CD8-positive, alpha-beta T cell (primary cell): ENCODE measurements at regions of chr3 and their contacts with region 1.

Region 1: GRCh38 chr3:105679951-105680350 is 188.9 kb downstream of the CBLB start:
- DNase-seq: no peak
- ATAC-seq: no peak
- H3K4me3 ChIP-seq: no peak overlapping the region
- H3K4me3 Mint-ChIP-seq: no peak overlapping the region
- H3K27ac ChIP-seq: no peak overlapping the region
- H3K27ac Mint-ChIP-seq: no peak overlapping the region
- H3K4me1 ChIP-seq: no peaks in the 10 kb centered on the region
- H3K4me1 Mint-ChIP-seq: no peaks in the 10 kb centered on the region
- H3K27me3 ChIP-seq: no peaks in the 10 kb centered on the region
- H3K27me3 Mint-ChIP-seq: no peaks in the 10 kb centered on the region
- CTCF ChIP-seq: no peak

Region 2: DNA sequence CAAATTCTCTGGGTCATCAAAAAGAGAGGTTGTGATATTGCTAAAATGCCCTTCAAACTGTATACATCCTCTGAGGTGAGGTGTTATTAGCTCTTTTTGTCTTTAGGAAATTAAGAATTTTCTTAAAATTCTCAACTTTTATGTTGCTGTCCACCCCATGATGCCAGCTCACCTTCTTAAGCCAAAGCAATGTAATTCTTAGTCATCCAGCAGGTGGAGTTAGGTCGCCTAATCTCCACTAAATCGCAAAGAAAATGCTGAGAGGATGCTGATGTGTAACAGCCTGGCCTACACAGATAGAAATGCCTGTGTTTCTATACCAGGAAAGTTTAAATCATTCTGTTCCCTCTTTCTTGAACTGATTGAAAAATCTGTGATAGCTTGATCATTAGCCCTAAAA is 1083.4 kb before region 1 on chr3:
- CTCF ChIA-PET with region 1: no interaction called
- POLR2A ChIA-PET with region 1: no interaction called
- intact Hi-C with region 1: loop called in 1 of 2 experiments (anchors 5 kb)
- DNase-seq: peak in 2 of 9 experiments; percentile 34 to 41
- ATAC-seq: no peak
- H3K4me3 ChIP-seq: no peak overlapping the region
- H3K4me3 Mint-ChIP-seq: no peak overlapping the region
- H3K27ac ChIP-seq: no peak overlapping the region
- H3K27ac Mint-ChIP-seq: no peak overlapping the region
- H3K4me1 ChIP-seq: no peaks in the 10 kb centered on the region
- H3K4me1 Mint-ChIP-seq: no peaks in the 10 kb centered on the region
- H3K27me3 ChIP-seq: no peaks in the 10 kb centered on the region
- H3K27me3 Mint-ChIP-seq: no peaks in the 10 kb centered on the region
- CTCF ChIP-seq: peak; percentile 17